Activated CD4-positive, alpha-beta T cell treated with anti-CD3 and anti-CD28 coated beads for 36 hours (primary cell): ENCODE measurements at regions of chr11 and their contacts with region 1.

Region 1: GRCh38 chr11:94128746-94129511 is at the start of gene PANX1:
- DNase-seq: peak; percentile 84
- ATAC-seq: peak; percentile 81
- H3K4me3 Mint-ChIP-seq: no peak within 1 kb of the TSS
- H3K27ac Mint-ChIP-seq: peak within 1 kb of the TSS; percentile 90
- H3K4me1 Mint-ChIP-seq: peaks cover 23% of the 10 kb centered on the region
- H3K27me3 Mint-ChIP-seq: no peaks in the 10 kb centered on the region
- total RNA-seq, gene PANX1: 9.8 to 10.7 TPM

Region 2: DNA sequence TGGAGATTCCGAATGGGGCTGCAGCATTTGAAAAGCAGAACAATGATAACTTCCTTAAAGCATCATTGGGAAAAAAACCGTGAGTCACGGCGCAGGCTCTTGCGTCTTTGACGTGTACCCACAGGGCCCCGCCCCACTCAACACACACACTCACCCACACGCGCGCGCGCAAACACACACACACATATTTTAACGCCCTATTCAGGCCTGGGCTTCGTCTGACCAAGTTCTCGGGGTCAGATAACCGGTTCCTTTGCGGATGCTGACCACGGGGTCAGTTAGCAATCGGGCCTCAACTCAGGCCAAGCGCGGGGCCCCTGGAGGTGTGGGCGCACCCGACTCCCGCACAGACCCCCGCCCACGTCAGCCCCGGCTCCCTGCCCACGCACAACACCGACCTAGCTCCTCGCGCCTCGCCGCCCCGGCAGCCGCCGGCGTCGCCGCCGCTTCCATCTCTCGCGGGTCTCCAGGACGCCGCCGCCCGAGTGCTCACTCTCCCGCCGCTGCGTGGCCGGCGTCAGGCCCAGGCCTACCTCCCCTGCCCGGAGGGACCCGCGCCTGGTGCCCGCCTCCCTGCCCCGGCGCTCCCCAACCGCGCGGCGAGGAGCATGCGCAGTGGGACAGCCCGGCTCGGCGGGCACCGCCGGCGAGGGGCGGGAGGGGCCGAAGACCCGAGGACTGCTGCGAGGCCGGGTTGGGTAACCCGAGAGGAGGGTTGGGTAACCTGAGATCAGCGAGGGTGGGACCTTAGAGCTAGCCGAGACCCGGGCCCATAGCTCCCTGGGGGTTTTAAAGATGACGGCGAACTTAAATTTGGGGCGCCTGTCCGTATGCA is 931.3 kb before region 1 on chr11 and contains the start of gene SLC36A4:
- CTCF ChIA-PET with region 1: no interaction called
- POLR2A ChIA-PET with region 1: no interaction called
- intact Hi-C with region 1: loop called in 1 of 2 experiments (anchors 5 kb)
- DNase-seq: peak; percentile 94
- ATAC-seq: peak; percentile 92
- H3K4me3 Mint-ChIP-seq: peak within 1 kb of the TSS; percentile 94
- H3K27ac Mint-ChIP-seq: peak within 1 kb of the TSS; percentile 97
- H3K4me1 Mint-ChIP-seq: peaks cover 19% of the 10 kb centered on the region
- H3K27me3 Mint-ChIP-seq: peaks cover 1% of the 10 kb centered on the region
- total RNA-seq, gene SLC36A4: 13.9 to 16.1 TPM

Region 3: DNA sequence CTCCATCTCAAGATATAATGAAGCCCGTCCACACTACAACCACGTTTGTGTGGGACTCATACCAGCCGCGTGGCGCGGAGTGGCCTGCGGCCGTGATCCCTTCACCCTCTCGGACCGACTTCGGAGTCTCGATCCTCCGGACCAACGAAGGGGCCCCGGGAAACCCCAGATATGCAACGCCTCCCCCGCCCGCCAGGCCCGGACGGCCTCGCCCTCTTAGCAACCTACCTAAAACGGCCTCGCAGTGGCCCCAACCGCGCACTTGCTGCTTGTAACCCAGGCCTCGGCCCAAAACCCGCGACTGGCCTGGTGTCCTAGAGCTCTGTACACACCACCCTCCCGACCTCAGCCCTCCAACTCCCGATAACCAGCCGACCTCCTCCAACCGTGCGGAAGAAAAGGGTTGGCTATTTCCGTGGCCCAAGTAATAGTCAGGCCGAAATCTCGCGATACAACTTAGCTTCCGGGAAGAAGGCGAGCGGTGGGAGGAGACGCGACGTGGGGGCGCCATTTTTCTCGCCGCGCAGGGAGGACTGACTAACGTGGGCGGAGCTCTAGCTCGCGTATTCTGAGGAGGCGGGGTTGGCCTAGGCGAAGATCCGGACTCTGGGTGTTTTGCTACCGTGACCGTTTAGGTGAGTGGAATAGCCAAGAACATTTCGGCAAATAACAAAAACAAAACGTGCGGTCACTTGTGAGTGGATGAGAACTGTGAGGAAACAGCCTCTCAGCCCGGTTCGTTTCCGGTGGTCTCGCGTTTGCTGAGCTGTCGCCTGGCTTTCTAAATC is 387.6 kb before region 1 on chr11 and contains the starts of genes C11orf54 and TAF1D:
- CTCF ChIA-PET with region 1: no interaction called
- POLR2A ChIA-PET with region 1: interaction called, 12 read pairs
- intact Hi-C with region 1: loop called in 1 of 2 experiments (anchors 1 kb)
- DNase-seq: peak; percentile 97
- ATAC-seq: peak; percentile 80
- H3K4me3 Mint-ChIP-seq: peak within 1 kb of the TSS; percentile 99
- H3K27ac Mint-ChIP-seq: peak within 1 kb of the TSS; percentile 98
- H3K4me1 Mint-ChIP-seq: peaks cover 38% of the 10 kb centered on the region
- H3K27me3 Mint-ChIP-seq: no peaks in the 10 kb centered on the region
- total RNA-seq, gene C11orf54: 13.8 to 15.7 TPM
- total RNA-seq, gene TAF1D: 326 to 355 TPM

Region 4: DNA sequence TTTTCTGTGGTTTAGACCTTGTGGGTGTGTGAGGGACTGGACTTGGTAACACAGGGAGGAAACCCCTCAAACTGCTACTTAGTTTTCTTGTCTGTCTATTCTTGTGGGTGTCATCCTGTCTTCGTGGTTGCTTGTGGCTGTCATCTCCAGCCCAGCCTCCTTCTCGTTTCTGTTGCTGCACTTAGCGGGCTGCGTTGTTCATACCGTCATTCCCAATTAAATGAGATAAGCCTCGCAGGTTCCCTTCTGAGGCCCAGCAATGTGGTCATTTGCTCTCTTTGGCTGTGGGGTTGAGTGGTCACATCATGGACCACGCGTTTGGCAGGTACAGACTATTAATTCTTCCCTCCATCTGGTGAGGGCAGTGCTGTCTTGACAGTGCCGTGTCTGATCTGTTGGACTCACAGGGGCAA is 18.5 kb after region 1 on chr11:
- CTCF ChIA-PET with region 1: interaction called, 3 read pairs
- POLR2A ChIA-PET with region 1: interaction called, 5 read pairs
- intact Hi-C with region 1: loop called (anchors 2 kb)
- DNase-seq: peak; percentile 63
- ATAC-seq: peak; percentile 66
- H3K4me3 Mint-ChIP-seq: peak overlapping the region; percentile 6
- H3K27ac Mint-ChIP-seq: no peak overlapping the region
- H3K4me1 Mint-ChIP-seq: peaks cover 82% of the 10 kb centered on the region
- H3K27me3 Mint-ChIP-seq: no peaks in the 10 kb centered on the region

Region 5: DNA sequence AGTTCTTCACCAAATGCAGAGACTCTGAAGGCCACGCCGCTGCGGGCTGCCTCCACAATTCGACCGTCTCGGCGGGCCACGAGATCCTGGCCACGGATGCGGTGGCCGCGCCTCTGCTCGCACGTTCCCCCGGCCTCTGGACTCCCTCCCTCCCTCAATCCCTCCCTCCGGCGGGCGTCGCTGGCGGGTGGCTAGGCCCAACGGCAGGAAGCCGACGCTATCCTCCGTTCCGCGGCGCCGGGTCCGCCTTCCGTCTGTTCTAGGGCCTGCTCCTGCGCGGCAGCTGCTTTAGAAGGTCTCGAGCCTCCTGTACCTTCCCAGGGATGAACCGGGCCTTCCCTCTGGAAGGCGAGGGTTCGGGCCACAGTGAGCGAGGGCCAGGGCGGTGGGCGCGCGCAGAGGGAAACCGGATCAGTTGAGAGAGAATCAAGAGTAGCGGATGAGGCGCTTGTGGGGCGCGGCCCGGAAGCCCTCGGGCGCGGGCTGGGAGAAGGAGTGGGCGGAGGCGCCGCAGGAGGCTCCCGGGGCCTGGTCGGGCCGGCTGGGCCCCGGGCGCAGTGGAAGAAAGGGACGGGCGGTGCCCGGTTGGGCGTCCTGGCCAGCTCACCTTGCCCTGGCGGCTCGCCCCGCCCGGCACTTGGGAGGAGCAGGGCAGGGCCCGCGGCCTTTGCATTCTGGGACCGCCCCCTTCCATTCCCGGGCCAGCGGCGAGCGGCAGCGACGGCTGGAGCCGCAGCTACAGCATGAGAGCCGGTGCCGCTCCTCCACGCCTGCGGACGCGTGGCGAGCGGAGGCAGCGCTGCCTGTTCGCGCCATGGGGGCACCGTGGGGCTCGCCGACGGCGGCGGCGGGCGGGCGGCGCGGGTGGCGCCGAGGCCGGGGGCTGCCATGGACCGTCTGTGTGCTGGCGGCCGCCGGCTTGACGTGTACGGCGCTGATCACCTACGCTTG is 415.0 kb after region 1 on chr11 and contains the start of gene FUT4:
- CTCF ChIA-PET with region 1: no interaction called
- POLR2A ChIA-PET with region 1: no interaction called
- intact Hi-C with region 1: loop called in 1 of 2 experiments (anchors 2 kb)
- DNase-seq: peak; percentile 87
- ATAC-seq: peak; percentile 83
- H3K4me3 Mint-ChIP-seq: peak within 1 kb of the TSS; percentile 92
- H3K27ac Mint-ChIP-seq: peak within 1 kb of the TSS; percentile 99
- H3K4me1 Mint-ChIP-seq: peaks cover 39% of the 10 kb centered on the region
- H3K27me3 Mint-ChIP-seq: no peaks in the 10 kb centered on the region
- total RNA-seq, gene FUT4: 4.4 to 4.9 TPM

Region 6: GRCh38 chr11:95089620-95090542 is 961.0 kb after region 1 on chr11 and contains the start of gene ENDOD1:
- CTCF ChIA-PET with region 1: no interaction called
- POLR2A ChIA-PET with region 1: no interaction called
- intact Hi-C with region 1: loop called in 1 of 2 experiments (anchors 10 kb)
- DNase-seq: peak; percentile 91
- ATAC-seq: peak; percentile 91
- H3K4me3 Mint-ChIP-seq: peak within 1 kb of the TSS; percentile 84
- H3K27ac Mint-ChIP-seq: peak within 1 kb of the TSS; percentile 96
- H3K4me1 Mint-ChIP-seq: peaks cover 61% of the 10 kb centered on the region
- H3K27me3 Mint-ChIP-seq: no peaks in the 10 kb centered on the region
- total RNA-seq, gene ENDOD1: 11.1 to 13.1 TPM